Naive thymus-derived CD4-positive, alpha-beta T cell (primary cell): ENCODE measurements at regions of chr19 and their contacts with region 1.

Region 1: GRCh38 chr19:47190167-47190727 is 40.8 kb downstream of the BBC3 start:
- DNase-seq: peak in 8 of 9 donors; percentile 52 to 77 (median 64)
- ATAC-seq: peak; percentile 53
- H3K4me3 ChIP-seq: no peak overlapping the region
- H3K4me3 Mint-ChIP-seq: peak overlapping the region; percentile 48 to 83 (median 72)
- H3K27ac ChIP-seq: peak overlapping the region; percentile 25
- H3K27ac Mint-ChIP-seq: peak overlapping the region; percentile 72 to 98 (median 95)
- H3K4me1 ChIP-seq: peaks cover 37 to 77% of the 10 kb centered on the region in 2 donors
- H3K4me1 Mint-ChIP-seq: peaks cover 41 to 81% (median 71%) of the 10 kb centered on the region in 7 donors
- H3K27me3 ChIP-seq: no peaks in the 10 kb centered on the region
- H3K27me3 Mint-ChIP-seq: no peaks in the 10 kb centered on the region

Region 2: DNA sequence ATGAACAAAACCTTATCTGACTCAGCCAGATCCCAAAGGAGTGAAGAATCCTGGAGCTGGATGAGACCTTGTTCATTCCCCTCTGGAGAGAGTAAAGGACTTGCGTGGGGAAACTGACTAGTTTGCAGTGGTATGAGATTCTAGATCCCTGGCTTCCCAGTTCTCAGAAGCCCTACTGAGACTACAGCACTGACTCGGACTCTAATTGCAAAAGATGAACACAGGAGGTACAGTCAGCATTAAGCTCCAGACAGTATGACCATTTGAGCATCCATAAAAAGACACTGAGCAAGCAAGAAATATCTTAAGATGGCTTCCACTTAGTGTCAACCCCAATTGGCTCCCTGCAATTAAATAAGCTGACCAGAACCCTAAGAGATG is 83.4 kb before region 1 on chr19:
- CTCF ChIA-PET with region 1: no interaction called
- POLR2A ChIA-PET with region 1: no interaction called
- intact Hi-C with region 1: no loop called
- DNase-seq: no peak
- ATAC-seq: no peak
- H3K4me3 ChIP-seq: peak overlapping the region; percentile 15
- H3K4me3 Mint-ChIP-seq: peak overlapping the region; percentile 43 to 100 (median 72)
- H3K27ac ChIP-seq: peak overlapping the region; percentile 99
- H3K27ac Mint-ChIP-seq: peak overlapping the region; percentile 20 to 100 (median 99)
- H3K4me1 ChIP-seq: peaks cover 41 to 47% of the 10 kb centered on the region in 2 donors
- H3K4me1 Mint-ChIP-seq: peaks cover 40 to 81% (median 70%) of the 10 kb centered on the region in 7 donors
- H3K27me3 ChIP-seq: no peaks in the 10 kb centered on the region
- H3K27me3 Mint-ChIP-seq: peaks cover 0 to 2% (median 0%) of the 10 kb centered on the region in 5 donors

Region 3: DNA sequence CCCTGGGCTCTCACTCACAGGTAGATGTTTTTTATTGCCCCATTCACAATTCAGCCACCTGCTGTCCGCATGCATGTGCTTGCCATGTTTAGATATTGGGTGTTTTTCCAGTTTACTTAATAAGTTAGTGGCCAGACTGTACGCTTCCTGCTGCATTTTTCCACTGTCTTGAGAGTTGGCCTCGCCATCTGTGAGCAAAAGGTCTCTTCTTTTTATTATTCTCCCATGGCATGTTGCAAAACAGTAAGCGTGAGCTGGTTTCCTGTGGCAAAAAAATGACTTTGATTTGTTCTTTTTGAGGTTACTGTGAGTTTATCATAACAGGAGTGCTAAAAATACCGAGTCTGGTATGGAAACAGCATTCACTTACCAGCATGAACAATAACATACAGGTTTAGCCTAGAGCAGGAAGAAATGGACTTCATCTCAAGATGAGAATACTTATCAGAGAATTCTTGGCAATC is 13.6 kb before region 1 on chr19:
- CTCF ChIA-PET with region 1: interaction called, 30 read pairs
- POLR2A ChIA-PET with region 1: interaction called, 386 read pairs
- intact Hi-C with region 1: loop called (anchors 1 kb)
- DNase-seq: peak in 8 of 9 donors; percentile 44 to 83 (median 79)
- ATAC-seq: peak; percentile 90
- H3K4me3 ChIP-seq: peak overlapping the region; percentile 28
- H3K4me3 Mint-ChIP-seq: peak overlapping the region; percentile 73 to 89 (median 81)
- H3K27ac ChIP-seq: peak overlapping the region; percentile 58
- H3K27ac Mint-ChIP-seq: peak overlapping the region; percentile 87 to 98 (median 96)
- H3K4me1 ChIP-seq: peaks cover 40 to 55% of the 10 kb centered on the region in 2 donors
- H3K4me1 Mint-ChIP-seq: peaks cover 40 to 85% (median 76%) of the 10 kb centered on the region in 7 donors
- H3K27me3 ChIP-seq: no peaks in the 10 kb centered on the region
- H3K27me3 Mint-ChIP-seq: no peaks in the 10 kb centered on the region

Region 4: DNA sequence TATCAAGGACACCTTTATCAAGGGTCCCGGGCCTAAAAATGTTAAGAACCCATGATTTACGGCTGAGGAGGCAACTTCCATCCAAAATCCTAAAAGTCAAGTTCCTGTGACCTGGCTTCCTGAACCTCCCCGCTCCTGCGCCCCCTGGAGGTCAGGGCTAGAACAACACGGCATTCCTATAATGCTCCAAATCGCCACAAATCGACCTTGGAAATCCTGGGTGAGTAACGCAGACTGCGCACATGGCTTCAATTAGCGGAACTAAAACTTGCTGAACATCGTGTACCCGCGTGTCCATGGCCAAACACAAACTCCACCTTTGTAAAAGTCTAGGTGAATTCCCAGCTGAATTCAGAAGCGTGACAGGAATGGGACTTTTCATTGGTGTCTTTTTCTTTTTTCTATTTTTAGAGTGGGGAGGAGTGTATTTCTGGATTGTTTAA is 115.1 kb after region 1 on chr19:
- CTCF ChIA-PET with region 1: no interaction called
- POLR2A ChIA-PET with region 1: no interaction called
- intact Hi-C with region 1: no loop called
- DNase-seq: peak; percentile 10 to 64 (median 38)
- ATAC-seq: peak; percentile 67
- H3K4me3 ChIP-seq: no peak overlapping the region
- H3K4me3 Mint-ChIP-seq: peak overlapping the region in 3 of 10 donors; percentile 16 to 35 (median 16)
- H3K27ac ChIP-seq: no peak overlapping the region
- H3K27ac Mint-ChIP-seq: peak overlapping the region in 1 of 9 donors; percentile 5
- H3K4me1 ChIP-seq: no peaks in the 10 kb centered on the region
- H3K4me1 Mint-ChIP-seq: peaks cover 0 to 10% (median 8%) of the 10 kb centered on the region in 7 donors
- H3K27me3 ChIP-seq: no peaks in the 10 kb centered on the region
- H3K27me3 Mint-ChIP-seq: peaks cover 0 to 24% (median 17%) of the 10 kb centered on the region in 5 donors